Vagina (tissue), 2 donors: ENCODE measurements at regions of chr6 and their contacts with region 1.

Region 1: GRCh38 chr6:141641951-141642350 is 490.8 kb upstream of the GJE1 start:
- DNase-seq: no peak
- H3K4me3 ChIP-seq: no peak overlapping the region
- H3K27ac ChIP-seq: no peak overlapping the region
- H3K4me1 ChIP-seq: no peaks in the 10 kb centered on the region
- H3K27me3 ChIP-seq: no peaks in the 10 kb centered on the region
- CTCF ChIP-seq: no peak
- POLR2A ChIP-seq: no peak

Region 2: GRCh38 chr6:141587482-141588266 is 54.3 kb before region 1 on chr6:
- intact Hi-C with region 1: loop called (anchors 2 kb)
- DNase-seq: no peak
- H3K4me3 ChIP-seq: no peak overlapping the region
- H3K27ac ChIP-seq: no peak overlapping the region
- H3K4me1 ChIP-seq: no peaks in the 10 kb centered on the region
- H3K27me3 ChIP-seq: no peaks in the 10 kb centered on the region
- CTCF ChIP-seq: no peak
- POLR2A ChIP-seq: no peak